BJ (cell line): ENCODE measurements at regions of chr9 and their contacts with region 1.

Region 1: DNA sequence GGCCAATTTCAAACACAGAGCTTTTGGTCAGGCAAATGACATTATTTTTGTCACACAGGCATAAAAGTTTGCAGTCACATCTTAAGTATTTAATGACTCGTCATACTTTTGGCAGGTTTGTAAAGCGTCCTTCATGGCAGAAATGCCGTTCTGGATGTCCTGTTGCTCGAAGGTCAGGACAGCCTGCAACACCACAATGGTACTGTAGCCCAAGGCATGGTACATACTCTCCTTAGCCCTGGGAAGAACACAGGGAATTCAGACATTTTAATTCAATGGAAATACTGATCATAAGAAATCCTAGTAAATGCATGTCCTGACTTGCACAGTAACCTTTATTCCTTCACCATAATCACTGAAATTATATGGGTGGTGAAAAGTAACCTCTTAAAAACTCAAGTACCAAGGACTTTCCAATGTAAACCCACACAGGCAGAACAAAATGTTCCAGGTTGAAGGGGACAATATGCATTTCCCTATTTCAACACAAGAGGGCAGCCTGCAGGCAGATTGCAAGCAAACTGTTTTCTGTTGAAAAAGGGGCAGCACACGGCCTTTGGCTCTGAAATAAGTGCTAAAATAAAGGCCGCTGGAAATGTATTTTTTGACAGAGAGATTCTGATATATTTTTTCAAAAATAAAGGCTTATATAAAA is 95.7 kb downstream of the TTC39B start:
- DNase-seq: peak; percentile 14
- H3K4me3 ChIP-seq: no peak overlapping the region
- H3K27me3 ChIP-seq: no peaks in the 10 kb centered on the region
- CTCF ChIP-seq: peak; percentile 89

Region 2: GRCh38 chr9:15231788-15232635 is 20.7 kb after region 1 on chr9:
- CTCF ChIA-PET with region 1: interaction called, 11 read pairs
- POLR2A ChIA-PET with region 1: no interaction called
- DNase-seq: no peak
- H3K4me3 ChIP-seq: no peak overlapping the region
- H3K27me3 ChIP-seq: no peaks in the 10 kb centered on the region
- CTCF ChIP-seq: peak; percentile 68

Region 3: GRCh38 chr9:15416880-15417279 is 205.6 kb after region 1 on chr9:
- CTCF ChIA-PET with region 1: interaction called, 21 read pairs
- POLR2A ChIA-PET with region 1: no interaction called
- DNase-seq: no peak
- H3K4me3 ChIP-seq: no peak overlapping the region
- H3K27me3 ChIP-seq: no peaks in the 10 kb centered on the region
- CTCF ChIP-seq: peak; percentile 44